ENCODE measurements at regions of chr15 and their contacts with region 1.

Region 1: GRCh38 chr15:90001683-90002427 is 731 bp downstream of the ZNF710 start:
- DNase-seq: peak; percentile 55 to 61
- H3K4me3 ChIP-seq: peak overlapping the region; percentile 27 to 79 (median 78)
- H3K27ac ChIP-seq: peak overlapping the region; percentile 71 to 89 (median 83)
- H3K4me1 ChIP-seq: peaks cover 22 to 51% of the 10 kb centered on the region in 2 donors
- H3K27me3 ChIP-seq: no peaks in the 10 kb centered on the region
- CTCF ChIP-seq: peak in 1 of 6 experiments; percentile 3
- POLR2A ChIP-seq: no peak

Region 2: GRCh38 chr15:89946781-89947221 is 55.1 kb before region 1 on chr15:
- intact Hi-C with region 1: no loop called
- DNase-seq: no peak
- H3K4me3 ChIP-seq: no peak overlapping the region
- H3K27ac ChIP-seq: no peak overlapping the region
- H3K4me1 ChIP-seq: no peaks in the 10 kb centered on the region
- H3K27me3 ChIP-seq: no peaks in the 10 kb centered on the region
- CTCF ChIP-seq: no peak
- POLR2A ChIP-seq: no peak

Region 3: DNA sequence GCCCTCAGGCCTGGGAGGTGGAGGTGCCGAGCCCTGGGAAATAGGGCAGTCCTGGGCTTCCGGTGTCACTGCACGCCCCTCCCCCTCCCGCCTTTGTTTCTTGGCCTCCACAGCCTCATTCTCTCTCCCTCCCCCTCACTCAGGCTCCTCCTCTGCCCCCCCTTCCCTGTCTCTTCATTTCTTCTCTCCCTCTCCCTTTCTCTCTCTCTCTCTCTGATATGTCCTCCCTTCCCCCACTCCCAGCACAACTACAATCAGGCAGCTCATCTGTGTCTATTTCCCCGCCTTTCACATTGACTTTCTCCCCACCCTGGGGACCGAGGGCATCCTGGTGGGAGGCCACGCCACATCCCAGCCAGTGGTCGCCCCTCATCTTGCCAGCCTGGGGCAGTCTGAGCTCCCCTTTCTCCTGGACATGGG is 60.2 kb after region 1 on chr15:
- intact Hi-C with region 1: loop called (anchors 10 kb)
- DNase-seq: peak; percentile 84 to 85
- H3K4me3 ChIP-seq: no peak overlapping the region
- H3K27ac ChIP-seq: peak overlapping the region; percentile 90 to 99 (median 96)
- H3K4me1 ChIP-seq: peaks cover 27 to 63% of the 10 kb centered on the region in 2 donors
- H3K27me3 ChIP-seq: no peaks in the 10 kb centered on the region
- CTCF ChIP-seq: no peak
- POLR2A ChIP-seq: no peak